ENCODE measurements at regions of chr7 and their contacts with region 1.

Region 1: DNA sequence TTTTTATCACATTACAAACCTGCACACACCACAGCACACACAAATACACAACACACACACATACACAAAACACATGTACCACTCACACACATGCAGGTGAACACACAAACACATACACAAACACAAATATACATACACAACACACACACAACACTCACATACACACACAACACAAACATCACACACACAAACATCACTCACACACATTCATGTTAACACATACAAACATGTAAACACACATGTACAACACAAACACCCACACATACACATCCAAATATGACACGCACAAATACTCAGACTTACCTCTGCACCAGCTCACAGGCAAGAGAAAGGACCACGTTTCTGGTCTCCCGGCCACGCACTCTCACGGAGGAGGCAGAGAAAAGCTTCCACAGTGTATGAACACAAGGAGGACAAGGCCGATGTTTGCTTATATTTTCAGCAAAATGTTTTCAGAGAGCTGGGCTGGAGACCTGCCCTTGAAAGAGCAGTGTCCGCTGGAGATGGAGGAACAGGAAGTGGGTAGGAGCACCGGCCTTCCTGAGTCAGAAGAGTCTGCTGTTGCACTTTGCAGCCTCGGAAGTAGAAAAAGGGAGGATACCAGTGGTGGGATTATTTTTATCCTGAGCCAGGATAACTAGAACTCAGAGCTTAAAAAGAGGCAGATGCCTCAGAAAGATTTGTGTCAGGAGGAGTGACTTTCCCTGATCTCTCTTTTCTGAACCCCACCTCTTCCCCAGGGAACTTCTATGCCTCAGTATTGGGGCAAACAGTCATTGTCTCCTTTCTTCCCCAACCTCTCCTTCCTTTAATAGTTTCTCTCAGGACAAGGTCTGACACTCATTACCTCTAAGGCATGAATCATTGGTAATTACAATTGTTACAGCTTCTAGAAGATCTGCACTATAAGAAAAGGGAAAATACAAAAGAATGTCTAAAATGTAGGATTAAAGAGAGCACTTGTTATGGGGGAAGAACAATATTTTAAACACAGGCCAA is at the start of gene GIMAP6:
- DNase-seq: peak; percentile 36 to 51 (median 44)
- H3K4me3 ChIP-seq: peak within 1 kb of the TSS; percentile 69 to 75
- H3K4me3 Mint-ChIP-seq: peak within 1 kb of the TSS; percentile 93 to 100 (median 98)
- H3K27ac ChIP-seq: peak within 1 kb of the TSS; percentile 64
- H3K27ac Mint-ChIP-seq: peak within 1 kb of the TSS; percentile 81 to 99 (median 95)
- H3K4me1 ChIP-seq: peaks cover 79% of the 10 kb centered on the region
- H3K4me1 Mint-ChIP-seq: peaks cover 61 to 88% (median 74%) of the 10 kb centered on the region in 4 donors
- H3K27me3 ChIP-seq: no peaks in the 10 kb centered on the region
- H3K27me3 Mint-ChIP-seq: no peaks in the 10 kb centered on the region
- total RNA-seq, gene GIMAP6: 158 to 173 TPM

Region 2: GRCh38 chr7:150580638-150581394 is 51.3 kb before region 1 on chr7:
- CTCF ChIA-PET with region 1: no interaction called
- POLR2A ChIA-PET with region 1: interaction called, 17 read pairs
- intact Hi-C with region 1: no loop called
- DNase-seq: no peak
- H3K4me3 ChIP-seq: no peak overlapping the region
- H3K4me3 Mint-ChIP-seq: peak overlapping the region in 3 of 8 donors; percentile 26 to 33 (median 33)
- H3K27ac ChIP-seq: no peak overlapping the region
- H3K27ac Mint-ChIP-seq: peak overlapping the region; percentile 47 to 85 (median 68)
- H3K4me1 ChIP-seq: peaks cover 14% of the 10 kb centered on the region
- H3K4me1 Mint-ChIP-seq: peaks cover 22 to 81% (median 36%) of the 10 kb centered on the region in 4 donors
- H3K27me3 ChIP-seq: no peaks in the 10 kb centered on the region
- H3K27me3 Mint-ChIP-seq: no peaks in the 10 kb centered on the region

Region 3: DNA sequence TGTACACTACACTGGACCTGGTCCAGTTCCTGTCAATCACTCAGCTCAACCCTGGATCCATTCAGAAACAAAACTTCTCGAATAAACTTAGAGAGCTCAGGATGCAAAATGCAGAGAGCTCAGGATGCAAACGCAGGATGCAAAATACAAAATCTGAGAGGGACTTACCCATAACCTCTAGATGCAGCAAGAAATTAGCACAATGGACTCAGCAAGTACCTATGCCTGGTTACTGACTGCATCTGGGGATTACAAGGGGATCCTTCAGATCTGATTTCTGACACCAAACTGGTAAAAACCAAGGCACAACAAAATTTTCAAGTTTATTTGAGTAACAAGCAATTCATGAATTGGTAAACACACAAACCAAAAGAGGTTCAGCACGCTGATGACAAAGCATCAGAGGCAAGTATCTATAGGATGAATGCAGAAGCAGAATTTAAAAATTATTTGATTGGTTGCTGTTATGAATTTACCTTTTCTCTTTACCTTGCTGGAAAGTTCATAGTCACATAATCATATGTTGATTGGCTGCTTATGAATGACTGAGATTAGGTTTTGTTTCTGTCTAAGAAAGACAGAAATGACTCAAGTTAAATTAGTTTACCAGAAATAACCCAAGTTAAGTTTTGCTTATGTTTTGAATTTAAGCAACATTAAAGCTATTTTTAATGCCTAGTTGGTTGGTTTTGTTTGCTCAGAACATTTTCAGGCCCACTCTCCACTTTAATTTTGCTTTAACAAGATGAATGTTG is 11.4 kb before region 1 on chr7:
- CTCF ChIA-PET with region 1: interaction called, 6 read pairs
- POLR2A ChIA-PET with region 1: interaction called, 24 read pairs
- intact Hi-C with region 1: loop called (anchors 1 kb)
- DNase-seq: no peak
- H3K4me3 ChIP-seq: no peak overlapping the region
- H3K4me3 Mint-ChIP-seq: peak overlapping the region; percentile 2 to 63 (median 44)
- H3K27ac ChIP-seq: no peak overlapping the region
- H3K27ac Mint-ChIP-seq: peak overlapping the region; percentile 70 to 92 (median 86)
- H3K4me1 ChIP-seq: peaks cover 41% of the 10 kb centered on the region
- H3K4me1 Mint-ChIP-seq: peaks cover 42 to 61% (median 54%) of the 10 kb centered on the region in 4 donors
- H3K27me3 ChIP-seq: no peaks in the 10 kb centered on the region
- H3K27me3 Mint-ChIP-seq: no peaks in the 10 kb centered on the region

Region 4: DNA sequence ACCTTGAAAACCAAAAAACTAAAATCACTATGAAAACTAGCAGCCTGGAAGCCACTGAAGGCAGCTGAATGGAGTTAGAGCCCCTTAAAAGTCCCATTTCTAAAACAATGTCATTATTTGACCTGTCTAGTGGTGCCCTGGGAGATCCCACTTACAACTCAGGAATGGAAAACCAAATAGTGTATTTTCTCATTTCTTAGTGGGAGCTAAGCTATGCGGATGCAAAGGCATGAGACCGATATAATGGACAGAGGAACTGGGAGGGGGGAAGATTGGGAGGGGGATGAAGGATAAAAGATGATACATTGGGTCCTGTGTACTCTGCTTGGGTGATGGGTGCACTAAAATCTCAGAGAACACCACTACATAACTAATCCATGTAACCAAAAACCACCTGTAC is 43.5 kb after region 1 on chr7:
- CTCF ChIA-PET with region 1: interaction called, 7 read pairs
- POLR2A ChIA-PET with region 1: interaction called, 189 read pairs
- intact Hi-C with region 1: no loop called
- DNase-seq: no peak
- H3K4me3 ChIP-seq: no peak overlapping the region
- H3K4me3 Mint-ChIP-seq: peak overlapping the region; percentile 39 to 89 (median 61)
- H3K27ac ChIP-seq: peak overlapping the region; percentile 18
- H3K27ac Mint-ChIP-seq: peak overlapping the region; percentile 26 to 92 (median 86)
- H3K4me1 ChIP-seq: peaks cover 75% of the 10 kb centered on the region
- H3K4me1 Mint-ChIP-seq: peaks cover 55 to 87% (median 70%) of the 10 kb centered on the region in 4 donors
- H3K27me3 ChIP-seq: no peaks in the 10 kb centered on the region
- H3K27me3 Mint-ChIP-seq: no peaks in the 10 kb centered on the region

Region 5: GRCh38 chr7:150695654-150696053 is 63.5 kb after region 1 on chr7:
- CTCF ChIA-PET with region 1: no interaction called
- POLR2A ChIA-PET with region 1: interaction called, 30 read pairs
- intact Hi-C with region 1: no loop called
- DNase-seq: no peak
- H3K4me3 ChIP-seq: no peak overlapping the region
- H3K4me3 Mint-ChIP-seq: peak overlapping the region in 2 of 8 donors; percentile 57
- H3K27ac ChIP-seq: no peak overlapping the region
- H3K27ac Mint-ChIP-seq: peak overlapping the region in 1 of 7 donors; percentile 4
- H3K4me1 ChIP-seq: peaks cover 6% of the 10 kb centered on the region
- H3K4me1 Mint-ChIP-seq: peaks cover 5 to 20% (median 13%) of the 10 kb centered on the region in 4 donors
- H3K27me3 ChIP-seq: no peaks in the 10 kb centered on the region
- H3K27me3 Mint-ChIP-seq: no peaks in the 10 kb centered on the region

Region 6: GRCh38 chr7:150737265-150738055 is 105.3 kb after region 1 on chr7 and contains the start of gene GIMAP5:
- CTCF ChIA-PET with region 1: interaction called, 8 read pairs
- POLR2A ChIA-PET with region 1: interaction called, 150 read pairs
- intact Hi-C with region 1: loop called (anchors 5 kb)
- DNase-seq: peak in 4 of 5 donors; percentile 58 to 74 (median 61)
- H3K4me3 ChIP-seq: peak within 1 kb of the TSS; percentile 81 to 82
- H3K4me3 Mint-ChIP-seq: peak within 1 kb of the TSS; percentile 92 to 100 (median 98)
- H3K27ac ChIP-seq: peak within 1 kb of the TSS; percentile 83
- H3K27ac Mint-ChIP-seq: peak within 1 kb of the TSS; percentile 86 to 98 (median 96)
- H3K4me1 ChIP-seq: peaks cover 64% of the 10 kb centered on the region
- H3K4me1 Mint-ChIP-seq: peaks cover 55 to 94% (median 64%) of the 10 kb centered on the region in 4 donors
- H3K27me3 ChIP-seq: no peaks in the 10 kb centered on the region
- H3K27me3 Mint-ChIP-seq: no peaks in the 10 kb centered on the region
- total RNA-seq, gene GIMAP5: 296 to 297 TPM

Region 7: GRCh38 chr7:150799741-150800580 is 167.8 kb after region 1 on chr7 and contains the start of gene TMEM176B:
- CTCF ChIA-PET with region 1: no interaction called
- POLR2A ChIA-PET with region 1: no interaction called
- intact Hi-C with region 1: no loop called
- DNase-seq: no peak
- H3K4me3 ChIP-seq: peak within 1 kb of the TSS in 1 of 2 donors; percentile 32
- H3K4me3 Mint-ChIP-seq: peak within 1 kb of the TSS; percentile 59 to 76 (median 74)
- H3K27ac ChIP-seq: no peak within 1 kb of the TSS
- H3K27ac Mint-ChIP-seq: no peak within 1 kb of the TSS
- H3K4me1 ChIP-seq: peaks cover 14% of the 10 kb centered on the region
- H3K4me1 Mint-ChIP-seq: peaks cover 2 to 14% (median 4%) of the 10 kb centered on the region in 4 donors
- H3K27me3 ChIP-seq: peaks cover 32% of the 10 kb centered on the region
- H3K27me3 Mint-ChIP-seq: peaks cover 42 to 45% of the 10 kb centered on the region in 2 donors
- total RNA-seq, gene TMEM176B: 1.6 to 2.3 TPM

Region 8: GRCh38 chr7:151198945-151199848 is 567.0 kb after region 1 on chr7:
- CTCF ChIA-PET with region 1: no interaction called
- POLR2A ChIA-PET with region 1: no interaction called
- intact Hi-C with region 1: no loop called
- DNase-seq: no peak
- H3K4me3 ChIP-seq: no peak overlapping the region
- H3K4me3 Mint-ChIP-seq: no peak overlapping the region
- H3K27ac ChIP-seq: no peak overlapping the region
- H3K27ac Mint-ChIP-seq: peak overlapping the region in 2 of 7 donors; percentile 24 to 46
- H3K4me1 ChIP-seq: peaks cover 16% of the 10 kb centered on the region
- H3K4me1 Mint-ChIP-seq: peaks cover under 1 to 10% (median 9%) of the 10 kb centered on the region in 4 donors
- H3K27me3 ChIP-seq: peaks cover 9% of the 10 kb centered on the region
- H3K27me3 Mint-ChIP-seq: no peaks in the 10 kb centered on the region

Measured in CD4-positive, alpha-beta memory T cell (primary cell).